Activated CD8-positive, alpha-beta T cell treated with anti-CD3 and anti-CD28 coated beads for 36 hours (primary cell): ENCODE measurements at regions of chr2 and their contacts with region 1.

Region 1: GRCh38 chr2:157468931-157469708 is 25.2 kb upstream of the CYTIP start:
- DNase-seq: no peak
- ATAC-seq: peak; percentile 73
- H3K4me3 Mint-ChIP-seq: peak overlapping the region; percentile 77
- H3K27ac Mint-ChIP-seq: peak overlapping the region; percentile 99
- H3K4me1 Mint-ChIP-seq: peaks cover 93% of the 10 kb centered on the region
- H3K27me3 Mint-ChIP-seq: no peaks in the 10 kb centered on the region
- CTCF ChIP-seq: no peak

Region 2: GRCh38 chr2:157413326-157414035 is 55.6 kb before region 1 on chr2:
- CTCF ChIA-PET with region 1: interaction called, 3 read pairs
- POLR2A ChIA-PET with region 1: interaction called, 1,592 read pairs
- intact Hi-C with region 1: no loop called
- DNase-seq: peak; percentile 71
- ATAC-seq: peak; percentile 65
- H3K4me3 Mint-ChIP-seq: peak overlapping the region; percentile 58
- H3K27ac Mint-ChIP-seq: peak overlapping the region; percentile 97
- H3K4me1 Mint-ChIP-seq: peaks cover 85% of the 10 kb centered on the region
- H3K27me3 Mint-ChIP-seq: no peaks in the 10 kb centered on the region
- CTCF ChIP-seq: no peak

Region 3: GRCh38 chr2:157433394-157433793 is 35.7 kb before region 1 on chr2:
- CTCF ChIA-PET with region 1: interaction called, 8 read pairs
- POLR2A ChIA-PET with region 1: interaction called, 1,592 read pairs
- intact Hi-C with region 1: loop called (anchors 5 kb)
- DNase-seq: no peak
- ATAC-seq: no peak
- H3K4me3 Mint-ChIP-seq: peak overlapping the region; percentile 90
- H3K27ac Mint-ChIP-seq: peak overlapping the region; percentile 94
- H3K4me1 Mint-ChIP-seq: peaks cover 51% of the 10 kb centered on the region
- H3K27me3 Mint-ChIP-seq: no peaks in the 10 kb centered on the region
- CTCF ChIP-seq: no peak

Region 4: DNA sequence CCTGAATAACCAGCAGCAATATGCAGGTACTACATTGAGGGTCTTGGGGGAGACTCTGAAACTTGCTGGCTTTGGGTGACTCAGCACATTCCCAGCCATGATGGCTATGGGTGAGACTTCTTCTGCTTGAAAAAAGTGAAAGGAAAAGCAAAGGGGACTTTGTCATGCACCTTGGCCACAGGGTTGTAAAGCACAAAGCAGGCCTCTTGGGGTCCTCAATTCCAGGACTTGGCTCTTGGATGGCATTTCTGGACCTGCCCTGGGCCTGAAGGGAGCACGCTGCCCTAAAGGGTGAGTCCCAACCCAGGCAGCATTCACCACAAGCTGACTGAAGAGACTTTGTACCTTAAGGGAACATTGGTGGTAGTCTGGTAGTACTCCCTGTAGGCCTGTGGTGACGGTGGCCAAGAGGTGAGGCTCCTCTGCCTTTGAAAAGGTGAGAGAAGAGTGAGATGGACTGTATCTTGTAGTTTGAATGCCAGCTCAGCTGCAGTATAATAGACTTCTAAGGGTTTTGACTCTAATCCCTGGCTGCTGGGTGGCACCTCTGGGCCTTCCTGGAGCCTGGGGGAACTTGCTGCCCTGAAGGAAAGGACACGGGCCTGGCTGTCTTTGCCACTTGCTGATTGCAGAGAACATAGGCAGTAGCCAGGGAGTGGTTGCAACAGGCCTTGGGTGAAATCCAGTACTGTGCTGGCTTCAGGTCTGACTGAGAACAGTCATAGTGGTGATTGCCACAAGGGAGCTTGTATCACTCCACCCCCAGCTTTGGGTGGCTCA is 11.3 kb after region 1 on chr2:
- CTCF ChIA-PET with region 1: interaction called, 9 read pairs
- POLR2A ChIA-PET with region 1: interaction called, 39 read pairs
- intact Hi-C with region 1: loop called (anchors 1 kb)
- DNase-seq: peak; percentile 79
- ATAC-seq: peak; percentile 66
- H3K4me3 Mint-ChIP-seq: peak overlapping the region; percentile 80
- H3K27ac Mint-ChIP-seq: peak overlapping the region; percentile 98
- H3K4me1 Mint-ChIP-seq: peaks cover 82% of the 10 kb centered on the region
- H3K27me3 Mint-ChIP-seq: no peaks in the 10 kb centered on the region
- CTCF ChIP-seq: no peak

Region 5: DNA sequence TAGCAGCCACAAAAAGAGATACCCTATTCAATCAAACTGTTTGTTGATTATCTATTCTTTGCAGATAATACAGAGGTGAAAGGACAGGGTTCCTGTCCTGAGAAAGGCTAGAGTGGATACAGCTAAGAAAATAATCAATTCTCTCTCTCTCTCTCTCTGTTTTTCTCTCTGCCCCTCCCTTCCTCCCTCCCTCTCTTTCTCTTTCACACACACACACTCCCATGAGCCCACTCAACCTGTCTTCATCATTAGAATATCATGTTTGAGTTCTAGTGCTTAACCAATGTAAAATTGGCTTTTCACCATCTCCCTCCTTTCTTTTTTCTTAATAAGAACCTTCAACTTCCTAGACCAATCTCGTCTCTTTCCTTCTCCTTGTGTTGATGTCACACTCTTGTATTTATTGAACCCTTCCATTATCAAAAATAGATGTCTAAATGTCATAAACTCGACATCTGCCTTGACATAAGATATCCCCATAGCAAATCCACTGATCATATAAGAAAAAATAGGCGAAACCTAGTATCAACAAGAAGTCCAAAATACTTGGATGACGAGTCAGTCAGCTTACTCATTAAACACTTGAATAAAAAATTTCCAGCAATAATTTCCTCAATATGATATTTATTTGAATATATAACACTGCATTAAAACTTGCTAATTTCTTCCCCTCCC is 17.6 kb after region 1 on chr2:
- CTCF ChIA-PET with region 1: interaction called, 10 read pairs
- POLR2A ChIA-PET with region 1: interaction called, 11 read pairs
- intact Hi-C with region 1: loop called (anchors 2 kb)
- DNase-seq: no peak
- ATAC-seq: peak; percentile 53
- H3K4me3 Mint-ChIP-seq: peak overlapping the region; percentile 68
- H3K27ac Mint-ChIP-seq: peak overlapping the region; percentile 85
- H3K4me1 Mint-ChIP-seq: peaks cover 80% of the 10 kb centered on the region
- H3K27me3 Mint-ChIP-seq: no peaks in the 10 kb centered on the region
- CTCF ChIP-seq: no peak